Activated CD8-positive, alpha-beta T cell treated with anti-CD3 and anti-CD28 coated beads, Interleukin-2, amount 10 ng/mL, durations not matched to agents 7 days and 5 days (primary cell): ENCODE measurements at regions of chr3 and their contacts with region 1.

Region 1: DNA sequence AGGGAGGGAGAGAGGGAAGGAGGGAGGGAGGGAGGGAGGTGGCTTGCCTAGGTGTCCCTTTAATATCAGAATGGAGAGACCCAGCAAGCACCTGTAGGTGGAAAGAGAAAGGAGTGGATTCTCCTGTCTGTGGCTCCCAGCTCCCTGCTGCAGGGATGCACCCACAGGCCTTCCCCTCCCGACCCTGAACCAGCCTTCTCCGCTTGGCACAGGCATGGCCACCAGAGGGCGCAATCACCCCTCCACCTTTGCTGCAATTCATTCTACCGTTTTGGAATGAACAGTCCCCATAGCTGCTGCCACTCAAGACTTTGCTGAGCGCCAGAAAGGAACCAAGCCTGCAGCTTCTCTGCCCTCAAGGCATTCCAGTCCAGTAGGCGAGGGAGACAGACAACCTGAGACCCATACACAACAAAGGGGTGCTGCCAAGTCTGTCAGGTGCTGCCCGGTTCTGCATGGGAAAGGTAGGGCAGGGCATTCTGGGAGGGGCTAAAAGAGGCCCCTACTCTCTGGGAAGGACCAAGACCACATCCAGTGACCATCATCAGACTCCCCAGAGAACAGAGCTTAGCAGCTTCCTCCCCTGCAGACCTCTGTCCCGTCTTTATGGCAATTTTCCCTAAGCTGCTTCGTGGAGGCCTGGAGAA is 4.9 kb downstream of the TLR9 start:
- DNase-seq: peak; percentile 93
- ATAC-seq: peak; percentile 66
- H3K4me3 Mint-ChIP-seq: peak overlapping the region; percentile 81
- H3K27ac Mint-ChIP-seq: peak overlapping the region; percentile 81
- H3K4me1 Mint-ChIP-seq: peaks cover 96% of the 10 kb centered on the region
- H3K27me3 Mint-ChIP-seq: no peaks in the 10 kb centered on the region

Region 2: GRCh38 chr3:52001443-52001974 is 219.0 kb before region 1 on chr3:
- CTCF ChIA-PET with region 1: interaction called, 17 read pairs
- POLR2A ChIA-PET with region 1: no interaction called
- DNase-seq: peak; percentile 92
- ATAC-seq: peak; percentile 98
- H3K4me3 Mint-ChIP-seq: no peak overlapping the region
- H3K27ac Mint-ChIP-seq: no peak overlapping the region
- H3K4me1 Mint-ChIP-seq: peaks cover 24% of the 10 kb centered on the region
- H3K27me3 Mint-ChIP-seq: peaks cover 10% of the 10 kb centered on the region

Region 3: DNA sequence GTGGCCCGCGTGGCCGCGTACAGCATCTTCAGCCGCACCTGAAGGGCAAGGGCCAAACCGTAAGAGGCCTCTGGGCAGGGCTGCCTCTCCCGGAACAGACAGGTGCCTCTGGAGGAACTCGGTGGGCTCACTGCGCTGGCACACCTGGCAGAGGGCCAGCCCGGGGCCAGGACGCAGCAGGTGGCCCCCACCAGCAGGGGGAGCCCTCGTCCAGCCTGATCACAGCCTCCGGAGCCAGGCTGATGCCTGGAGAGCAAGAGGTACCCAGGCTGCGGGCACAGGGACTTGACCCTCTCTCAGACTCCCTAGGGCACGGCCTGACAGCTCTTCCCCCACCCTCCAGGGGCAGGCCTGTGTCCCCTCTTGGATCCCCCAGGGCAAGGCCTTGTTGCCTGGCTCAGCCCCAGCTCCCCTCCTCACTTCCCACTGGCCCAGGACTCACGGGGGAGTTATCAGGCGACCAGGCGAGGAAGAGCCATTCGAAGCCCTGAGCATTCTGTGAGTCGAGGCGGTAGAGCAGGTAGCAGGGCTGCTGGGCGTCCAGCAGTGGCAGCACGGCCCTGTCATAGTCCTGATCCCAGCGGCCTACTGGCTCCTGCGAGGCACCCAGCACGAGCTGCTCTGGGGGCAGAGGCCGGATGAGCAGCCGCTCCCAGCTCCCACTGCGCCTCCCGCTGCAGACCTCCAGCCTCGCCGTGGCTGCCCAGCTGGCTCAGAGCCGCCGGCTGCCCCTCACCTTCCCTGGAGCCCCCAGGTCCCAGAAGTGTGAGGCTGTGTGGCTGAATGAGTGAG is 11.2 kb after region 1 on chr3:
- CTCF ChIA-PET with region 1: interaction called, 176 read pairs
- POLR2A ChIA-PET with region 1: interaction called, 32 read pairs
- DNase-seq: peak; percentile 89
- ATAC-seq: peak; percentile 88
- H3K4me3 Mint-ChIP-seq: peak overlapping the region; percentile 38
- H3K27ac Mint-ChIP-seq: peak overlapping the region; percentile 77
- H3K4me1 Mint-ChIP-seq: peaks cover 62% of the 10 kb centered on the region
- H3K27me3 Mint-ChIP-seq: no peaks in the 10 kb centered on the region

Region 4: GRCh38 chr3:52245322-52246263 is 25.1 kb after region 1 on chr3 and contains the start of gene PPM1M:
- CTCF ChIA-PET with region 1: interaction called, 30 read pairs
- POLR2A ChIA-PET with region 1: interaction called, 32 read pairs
- DNase-seq: peak; percentile 68
- ATAC-seq: peak; percentile 63
- H3K4me3 Mint-ChIP-seq: peak within 1 kb of the TSS; percentile 92
- H3K27ac Mint-ChIP-seq: peak within 1 kb of the TSS; percentile 87
- H3K4me1 Mint-ChIP-seq: peaks cover 83% of the 10 kb centered on the region
- H3K27me3 Mint-ChIP-seq: no peaks in the 10 kb centered on the region
- total RNA-seq, gene PPM1M: 90.7 to 91.9 TPM

Region 5: GRCh38 chr3:52291508-52292181 is 71.1 kb after region 1 on chr3:
- CTCF ChIA-PET with region 1: interaction called, 30 read pairs
- POLR2A ChIA-PET with region 1: interaction called, 3 read pairs
- DNase-seq: peak; percentile 70
- ATAC-seq: peak; percentile 23
- H3K4me3 Mint-ChIP-seq: no peak overlapping the region
- H3K27ac Mint-ChIP-seq: peak overlapping the region; percentile 78
- H3K4me1 Mint-ChIP-seq: peaks cover 34% of the 10 kb centered on the region
- H3K27me3 Mint-ChIP-seq: no peaks in the 10 kb centered on the region

Region 6: DNA sequence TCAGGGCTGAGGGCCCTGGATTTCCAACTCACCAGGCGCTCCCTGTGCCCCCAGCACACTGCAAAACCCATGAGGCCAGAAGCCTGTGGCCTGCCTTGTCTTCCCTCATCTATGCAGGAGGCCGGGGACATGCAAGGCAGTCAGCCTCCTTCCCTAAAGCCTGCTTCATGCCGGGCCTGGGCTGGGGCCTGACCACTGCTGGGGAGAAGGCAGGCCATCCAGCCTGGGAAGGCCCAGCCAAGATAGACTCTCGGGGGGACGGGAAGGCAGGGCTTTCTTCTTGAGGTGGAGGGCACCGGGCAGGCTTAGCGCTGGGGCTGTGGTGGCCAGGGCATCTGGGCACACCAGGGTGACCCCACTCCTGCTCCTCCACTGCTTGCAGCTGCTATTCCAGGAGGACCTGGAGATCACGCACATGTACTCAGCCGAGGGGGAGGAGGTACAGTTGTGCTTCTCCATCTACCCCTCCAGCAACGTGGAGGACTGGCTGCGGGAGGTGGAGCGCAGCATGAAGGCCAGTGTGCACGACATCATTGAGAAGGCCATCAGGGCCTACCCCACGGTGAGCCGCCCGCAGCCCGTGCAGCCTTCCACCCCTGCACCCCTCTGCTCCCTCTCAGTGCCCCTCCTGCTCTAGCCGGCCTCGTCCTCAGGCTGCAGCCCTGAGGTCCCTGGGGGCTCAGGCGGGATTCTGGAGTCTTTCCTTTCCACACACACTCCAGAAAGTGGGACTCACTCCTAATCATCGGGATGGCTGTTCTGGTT is 137.9 kb after region 1 on chr3:
- CTCF ChIA-PET with region 1: no interaction called
- POLR2A ChIA-PET with region 1: no interaction called
- DNase-seq: no peak
- ATAC-seq: no peak
- H3K4me3 Mint-ChIP-seq: no peak overlapping the region
- H3K27ac Mint-ChIP-seq: no peak overlapping the region
- H3K4me1 Mint-ChIP-seq: peaks cover 6% of the 10 kb centered on the region
- H3K27me3 Mint-ChIP-seq: no peaks in the 10 kb centered on the region